IMR-90 (cell line): ENCODE measurements at regions of chr10 and their contacts with region 1.

Region 1: DNA sequence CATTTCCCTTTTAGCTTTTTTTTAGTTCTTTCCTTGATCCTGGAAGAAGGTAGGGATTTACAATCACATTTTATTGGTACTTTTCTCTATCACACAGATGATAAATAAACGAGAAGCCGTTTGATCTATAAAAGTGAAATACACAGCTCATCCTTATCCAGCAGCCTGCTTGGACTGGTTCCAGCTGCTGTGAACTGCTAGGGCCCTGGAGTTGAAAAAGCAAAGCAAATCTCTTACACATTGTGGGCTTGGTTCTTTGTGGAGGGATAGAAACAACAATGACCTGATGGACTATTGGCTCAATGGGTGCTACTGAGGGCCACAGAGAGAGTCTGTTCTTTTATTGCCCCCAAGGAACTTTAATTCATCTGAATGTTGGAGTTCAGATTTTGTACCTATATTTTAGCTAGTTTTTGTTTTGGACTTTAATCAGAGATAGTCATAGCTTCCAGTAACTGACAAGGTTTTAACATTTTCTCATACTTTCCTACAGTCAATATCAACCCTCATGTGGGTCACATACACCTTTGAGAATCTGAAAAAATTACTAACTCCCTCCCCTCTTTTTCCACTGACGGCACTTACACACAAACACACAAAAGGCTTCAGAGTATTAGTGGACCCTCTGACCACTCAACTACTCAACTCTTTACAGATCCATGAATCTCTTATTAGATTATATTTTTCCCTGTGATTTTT is 91.6 kb upstream of the CCDC6 start:
- DNase-seq: no peak
- ATAC-seq: no peak
- H3K4me3 ChIP-seq: no peak overlapping the region
- H3K27ac ChIP-seq: no peak overlapping the region
- H3K4me1 ChIP-seq: no peaks in the 10 kb centered on the region
- H3K27me3 ChIP-seq: no peaks in the 10 kb centered on the region
- CTCF ChIP-seq: no peak
- POLR2A ChIP-seq: no peak
- RAD21 ChIP-seq: no peak

Region 2: GRCh38 chr10:59885430-59886134 is 112.4 kb before region 1 on chr10:
- CTCF ChIA-PET with region 1: no interaction called
- POLR2A ChIA-PET with region 1: no interaction called
- dilution Hi-C with region 1: no loop called
- in situ Hi-C with region 1: no loop called
- intact Hi-C with region 1: no loop called
- DNase-seq: no peak
- ATAC-seq: no peak
- H3K4me3 ChIP-seq: no peak overlapping the region
- H3K27ac ChIP-seq: no peak overlapping the region
- H3K4me1 ChIP-seq: no peaks in the 10 kb centered on the region
- H3K27me3 ChIP-seq: no peaks in the 10 kb centered on the region
- CTCF ChIP-seq: no peak
- POLR2A ChIP-seq: no peak
- RAD21 ChIP-seq: no peak

Region 3: DNA sequence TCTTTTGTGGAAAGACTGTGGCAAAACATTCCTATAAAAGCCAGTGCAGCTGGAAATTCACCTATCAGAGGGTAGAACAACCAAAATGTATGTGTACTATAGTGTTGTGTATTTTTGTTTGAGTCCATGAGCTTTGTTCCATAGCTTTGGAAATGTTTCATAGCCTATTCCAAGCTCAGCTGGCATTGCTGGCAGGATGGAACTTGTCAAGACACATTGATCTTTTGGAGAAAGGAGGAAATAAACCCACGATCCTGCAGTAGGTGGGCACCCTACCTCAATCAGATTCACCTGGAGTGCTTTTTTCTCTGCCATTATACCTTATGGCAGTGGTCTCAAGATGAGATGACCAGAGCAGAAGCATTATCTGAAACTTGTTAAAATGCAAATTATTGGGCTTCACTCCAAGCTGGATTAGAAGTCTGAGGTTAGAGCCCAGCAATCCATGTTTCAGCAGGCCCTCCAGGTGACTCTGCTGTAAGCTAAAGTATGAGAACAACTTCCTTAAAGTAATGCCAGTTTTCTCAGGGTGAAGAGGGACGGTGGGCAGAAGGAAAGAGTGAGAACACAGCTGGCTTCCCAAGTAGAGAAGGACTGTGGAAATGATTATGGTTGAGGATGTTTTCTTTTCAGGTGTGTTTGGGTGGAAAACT is 750.0 kb after region 1 on chr10:
- CTCF ChIA-PET with region 1: interaction called, 10 read pairs
- POLR2A ChIA-PET with region 1: no interaction called
- dilution Hi-C with region 1: no loop called
- in situ Hi-C with region 1: no loop called
- intact Hi-C with region 1: no loop called
- DNase-seq: no peak
- ATAC-seq: no peak
- H3K4me3 ChIP-seq: no peak overlapping the region
- H3K27ac ChIP-seq: no peak overlapping the region
- H3K4me1 ChIP-seq: no peaks in the 10 kb centered on the region
- H3K27me3 ChIP-seq: peaks cover 22% of the 10 kb centered on the region
- CTCF ChIP-seq: no peak
- POLR2A ChIP-seq: no peak
- RAD21 ChIP-seq: no peak